ENCODE measurements at regions of chr1 and their contacts with region 1.

Region 1: GRCh38 chr1:205711104-205712020 is 31.1 kb upstream of the SLC45A3 start:
- DNase-seq: no peak
- ATAC-seq: peak; percentile 91
- H3K4me3 Mint-ChIP-seq: no peak overlapping the region
- H3K27ac Mint-ChIP-seq: peak overlapping the region; percentile 9
- H3K4me1 Mint-ChIP-seq: peaks cover 23% of the 10 kb centered on the region
- H3K27me3 Mint-ChIP-seq: no peaks in the 10 kb centered on the region
- CTCF ChIP-seq: peak; percentile 46

Region 2: GRCh38 chr1:204623894-204624361 is 1087.4 kb before region 1 on chr1:
- CTCF ChIA-PET with region 1: no interaction called
- POLR2A ChIA-PET with region 1: no interaction called
- intact Hi-C with region 1: no loop called
- DNase-seq: no peak
- ATAC-seq: no peak
- H3K4me3 Mint-ChIP-seq: no peak overlapping the region
- H3K27ac Mint-ChIP-seq: no peak overlapping the region
- H3K4me1 Mint-ChIP-seq: no peaks in the 10 kb centered on the region
- H3K27me3 Mint-ChIP-seq: no peaks in the 10 kb centered on the region
- CTCF ChIP-seq: no peak

Region 3: GRCh38 chr1:205440476-205441317 is 270.7 kb before region 1 on chr1:
- CTCF ChIA-PET with region 1: no interaction called
- POLR2A ChIA-PET with region 1: no interaction called
- intact Hi-C with region 1: no loop called
- DNase-seq: peak; percentile 41
- ATAC-seq: peak; percentile 84
- H3K4me3 Mint-ChIP-seq: peak overlapping the region; percentile 82
- H3K27ac Mint-ChIP-seq: peak overlapping the region; percentile 79
- H3K4me1 Mint-ChIP-seq: peaks cover 58% of the 10 kb centered on the region
- H3K27me3 Mint-ChIP-seq: no peaks in the 10 kb centered on the region
- CTCF ChIP-seq: no peak

Region 4: DNA sequence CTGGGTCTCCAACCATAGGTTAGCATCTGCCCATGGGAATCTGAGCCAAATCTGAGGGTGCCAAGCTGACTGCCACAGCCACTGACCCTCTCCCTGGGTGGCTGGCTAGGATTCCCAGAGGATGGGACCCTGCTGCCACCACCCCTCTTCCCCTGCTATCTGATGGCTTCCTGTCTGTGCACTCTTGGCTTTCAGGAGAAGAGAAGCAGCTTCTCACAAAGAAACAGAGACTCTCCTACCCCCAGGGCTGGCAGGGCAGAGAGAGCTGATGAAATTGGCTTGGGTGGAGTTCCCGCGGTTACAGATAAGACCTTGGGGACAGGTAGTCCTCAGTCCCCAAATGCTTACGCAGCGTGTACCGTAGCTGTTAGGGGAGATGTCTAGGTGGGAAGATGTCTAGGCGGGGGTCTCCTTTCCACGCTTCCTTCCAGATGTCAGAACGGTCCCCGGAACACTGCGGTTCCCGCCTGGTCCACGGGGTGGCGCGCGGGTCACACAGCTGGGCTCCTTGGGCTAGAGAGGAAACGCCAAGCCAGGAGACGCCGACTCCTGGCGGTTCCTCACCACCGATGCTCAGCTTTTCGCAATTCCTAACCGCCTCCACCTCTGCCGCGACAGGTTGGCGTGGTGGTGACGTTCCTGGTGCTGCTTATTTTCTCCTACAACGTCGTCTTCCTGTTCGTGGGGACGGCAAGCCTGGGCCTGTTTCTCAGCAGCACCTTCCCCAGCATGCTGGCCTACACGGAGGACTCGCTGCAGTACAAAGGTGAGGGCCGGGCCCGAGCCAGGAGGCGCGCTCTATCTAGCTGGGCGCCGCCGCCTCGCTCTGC is 119.6 kb before region 1 on chr1:
- CTCF ChIA-PET with region 1: interaction called, 69 read pairs
- POLR2A ChIA-PET with region 1: interaction called, 6 read pairs
- intact Hi-C with region 1: loop called (anchors 1 kb)
- DNase-seq: peak; percentile 89
- ATAC-seq: peak; percentile 89
- H3K4me3 Mint-ChIP-seq: peak overlapping the region; percentile 90
- H3K27ac Mint-ChIP-seq: peak overlapping the region; percentile 90
- H3K4me1 Mint-ChIP-seq: peaks cover 48% of the 10 kb centered on the region
- H3K27me3 Mint-ChIP-seq: no peaks in the 10 kb centered on the region
- CTCF ChIP-seq: peak; percentile 87

Region 5: DNA sequence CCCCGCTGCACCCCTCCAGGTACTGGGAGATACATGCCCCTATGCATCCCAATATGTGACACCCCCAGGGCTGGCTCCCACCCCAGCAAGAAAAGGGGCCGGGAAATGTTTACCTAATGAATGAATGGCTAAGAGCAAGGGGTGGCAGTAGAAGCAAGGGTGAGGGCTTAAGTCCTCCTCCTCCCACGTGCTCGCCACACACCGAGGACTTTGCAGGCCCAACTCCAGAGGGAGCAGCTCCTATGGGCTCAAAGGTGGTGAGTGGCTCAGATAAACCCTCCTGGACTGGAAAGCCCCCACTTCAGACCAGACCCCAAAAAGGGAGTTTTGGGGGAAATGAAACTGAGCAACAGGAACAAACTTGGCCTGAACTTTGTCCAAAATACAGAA is 42.4 kb before region 1 on chr1:
- CTCF ChIA-PET with region 1: interaction called, 628 read pairs
- POLR2A ChIA-PET with region 1: interaction called, 18 read pairs
- intact Hi-C with region 1: loop called (anchors 1 kb)
- DNase-seq: no peak
- ATAC-seq: peak; percentile 68
- H3K4me3 Mint-ChIP-seq: peak overlapping the region; percentile 80
- H3K27ac Mint-ChIP-seq: peak overlapping the region; percentile 93
- H3K4me1 Mint-ChIP-seq: peaks cover 87% of the 10 kb centered on the region
- H3K27me3 Mint-ChIP-seq: no peaks in the 10 kb centered on the region
- CTCF ChIP-seq: no peak

Region 6: DNA sequence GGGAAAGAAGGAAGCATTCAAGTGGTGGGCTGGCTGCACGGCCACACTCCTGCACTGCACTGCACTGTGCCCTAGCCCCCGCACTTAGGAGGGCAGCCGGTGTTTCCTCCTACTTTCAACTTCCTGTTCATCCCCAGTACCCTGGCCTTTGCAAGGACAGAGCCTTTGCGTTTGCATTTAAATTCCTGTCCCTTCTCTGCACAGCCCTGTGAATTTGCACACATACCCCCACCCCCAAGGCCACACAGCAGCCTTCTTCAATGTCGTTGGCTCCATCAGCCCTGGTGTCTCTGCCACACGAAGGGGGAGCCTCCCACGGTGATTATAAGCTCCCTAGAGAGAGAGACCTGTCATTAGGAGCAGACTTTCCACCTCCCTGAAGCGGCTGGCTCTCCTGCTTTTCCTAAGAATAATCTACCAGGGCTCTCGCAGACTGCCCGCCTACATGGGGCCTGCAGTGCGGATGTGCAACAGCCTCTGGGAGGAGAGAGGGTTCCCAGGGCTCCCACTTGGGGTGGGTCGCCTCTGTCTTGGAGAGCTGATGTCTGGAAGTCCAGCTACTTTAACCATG is 17.9 kb before region 1 on chr1:
- CTCF ChIA-PET with region 1: interaction called, 4 read pairs
- POLR2A ChIA-PET with region 1: no interaction called
- intact Hi-C with region 1: loop called (anchors 2 kb)
- DNase-seq: no peak
- ATAC-seq: no peak
- H3K4me3 Mint-ChIP-seq: no peak overlapping the region
- H3K27ac Mint-ChIP-seq: no peak overlapping the region
- H3K4me1 Mint-ChIP-seq: peaks cover 9% of the 10 kb centered on the region
- H3K27me3 Mint-ChIP-seq: peaks cover 8% of the 10 kb centered on the region
- CTCF ChIP-seq: no peak

Region 7: GRCh38 chr1:205783904-205784303 is 72.5 kb after region 1 on chr1:
- CTCF ChIA-PET with region 1: no interaction called
- POLR2A ChIA-PET with region 1: no interaction called
- intact Hi-C with region 1: no loop called
- DNase-seq: no peak
- ATAC-seq: no peak
- H3K4me3 Mint-ChIP-seq: no peak overlapping the region
- H3K27ac Mint-ChIP-seq: no peak overlapping the region
- H3K4me1 Mint-ChIP-seq: peaks cover 4% of the 10 kb centered on the region
- H3K27me3 Mint-ChIP-seq: no peaks in the 10 kb centered on the region
- CTCF ChIP-seq: no peak

Region 8: GRCh38 chr1:206117151-206117948 is 406.0 kb after region 1 on chr1 and contains the start of gene AVPR1B:
- CTCF ChIA-PET with region 1: no interaction called
- POLR2A ChIA-PET with region 1: no interaction called
- intact Hi-C with region 1: loop called (anchors 5 kb)
- DNase-seq: peak; percentile 49
- ATAC-seq: peak; percentile 88
- H3K4me3 Mint-ChIP-seq: peak within 1 kb of the TSS; percentile 77
- H3K27ac Mint-ChIP-seq: peak within 1 kb of the TSS; percentile 50
- H3K4me1 Mint-ChIP-seq: peaks cover 13% of the 10 kb centered on the region
- H3K27me3 Mint-ChIP-seq: peaks cover 22% of the 10 kb centered on the region
- CTCF ChIP-seq: no peak
- total RNA-seq, gene AVPR1B: not detected in 2 replicates

Measured in activated B cell treated with CpG ODN at 0.5 μM for 24 hours (primary cell).